Activated CD8-positive, alpha-beta T cell treated with anti-CD3 and anti-CD28 coated beads for 36 hours (primary cell): ENCODE measurements at regions of chr1 and their contacts with region 1.

Region 1: GRCh38 chr1:37574834-37575480 is 18.2 kb downstream of the DNALI1 start:
- DNase-seq: peak; percentile 20
- ATAC-seq: peak; percentile 58
- H3K4me3 Mint-ChIP-seq: no peak overlapping the region
- H3K27ac Mint-ChIP-seq: peak overlapping the region; percentile 80
- H3K4me1 Mint-ChIP-seq: peaks cover 60% of the 10 kb centered on the region
- H3K27me3 Mint-ChIP-seq: no peaks in the 10 kb centered on the region
- CTCF ChIP-seq: no peak

Region 2: GRCh38 chr1:37588939-37589338 is 14.0 kb after region 1 on chr1:
- CTCF ChIA-PET with region 1: no interaction called
- POLR2A ChIA-PET with region 1: interaction called, 10 read pairs
- intact Hi-C with region 1: no loop called
- DNase-seq: no peak
- ATAC-seq: no peak
- H3K4me3 Mint-ChIP-seq: no peak overlapping the region
- H3K27ac Mint-ChIP-seq: no peak overlapping the region
- H3K4me1 Mint-ChIP-seq: peaks cover 27% of the 10 kb centered on the region
- H3K27me3 Mint-ChIP-seq: no peaks in the 10 kb centered on the region
- CTCF ChIP-seq: no peak